ENCODE measurements at regions of chr1 and their contacts with region 1.

Region 1: GRCh38 chr1:215132156-215132555 is 49.6 kb downstream of the KCNK2 start:
- DNase-seq: no peak
- H3K4me3 ChIP-seq: no peak overlapping the region
- H3K27ac ChIP-seq: no peak overlapping the region
- H3K4me1 ChIP-seq: no peaks in the 10 kb centered on the region
- H3K27me3 ChIP-seq: no peaks in the 10 kb centered on the region
- CTCF ChIP-seq: no peak
- POLR2A ChIP-seq: no peak

Region 2: DNA sequence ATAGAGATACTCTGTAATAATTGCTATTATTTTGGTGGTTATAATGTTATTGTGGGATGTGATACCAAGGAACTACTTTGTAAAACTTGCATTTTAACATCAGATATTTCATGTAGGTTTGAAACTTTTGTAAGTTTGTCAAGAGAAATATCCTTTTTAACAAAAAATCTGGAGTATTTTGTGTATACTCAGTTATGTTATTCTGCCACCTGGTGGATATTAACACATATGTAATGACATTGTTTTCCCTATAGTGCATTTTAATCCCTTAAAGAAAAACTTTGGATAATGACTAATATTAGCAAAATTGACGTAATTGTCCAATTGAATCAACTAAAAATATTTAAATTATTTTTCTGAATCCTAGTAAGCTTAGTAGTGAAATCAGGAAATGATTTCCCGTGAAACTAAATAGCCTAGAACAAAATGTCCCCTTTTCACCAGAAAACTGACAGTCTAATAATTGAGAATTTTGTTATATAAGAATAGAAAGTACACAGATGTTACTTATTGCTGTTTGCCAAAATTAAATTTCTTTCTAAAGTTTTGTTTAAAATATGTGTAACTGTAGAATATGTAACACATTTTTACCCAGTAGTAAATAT is 474.5 kb after region 1 on chr1:
- intact Hi-C with region 1: loop called (anchors 10 kb)
- DNase-seq: no peak
- H3K4me3 ChIP-seq: no peak overlapping the region
- H3K27ac ChIP-seq: no peak overlapping the region
- H3K4me1 ChIP-seq: peaks cover 0 to 8% of the 10 kb centered on the region in 2 donors
- H3K27me3 ChIP-seq: no peaks in the 10 kb centered on the region
- CTCF ChIP-seq: peak; percentile 32 to 47 (median 33)
- POLR2A ChIP-seq: no peak